Activated CD4-positive, alpha-beta T cell treated with anti-CD3 and anti-CD28 coated beads for 36 hours (primary cell): ENCODE measurements at regions of chr11 and their contacts with region 1.

Region 1: GRCh38 chr11:123478352-123478987 is 48.4 kb downstream of the GRAMD1B start:
- DNase-seq: peak; percentile 40
- ATAC-seq: peak; percentile 22
- H3K4me3 Mint-ChIP-seq: no peak overlapping the region
- H3K27ac Mint-ChIP-seq: peak overlapping the region; percentile 32
- H3K4me1 Mint-ChIP-seq: peaks cover 36% of the 10 kb centered on the region
- H3K27me3 Mint-ChIP-seq: no peaks in the 10 kb centered on the region

Region 2: GRCh38 chr11:121917482-121917881 is 1561.0 kb before region 1 on chr11:
- CTCF ChIA-PET with region 1: no interaction called
- POLR2A ChIA-PET with region 1: no interaction called
- intact Hi-C with region 1: no loop called
- DNase-seq: no peak
- ATAC-seq: no peak
- H3K4me3 Mint-ChIP-seq: no peak overlapping the region
- H3K27ac Mint-ChIP-seq: no peak overlapping the region
- H3K4me1 Mint-ChIP-seq: no peaks in the 10 kb centered on the region
- H3K27me3 Mint-ChIP-seq: no peaks in the 10 kb centered on the region

Region 3: DNA sequence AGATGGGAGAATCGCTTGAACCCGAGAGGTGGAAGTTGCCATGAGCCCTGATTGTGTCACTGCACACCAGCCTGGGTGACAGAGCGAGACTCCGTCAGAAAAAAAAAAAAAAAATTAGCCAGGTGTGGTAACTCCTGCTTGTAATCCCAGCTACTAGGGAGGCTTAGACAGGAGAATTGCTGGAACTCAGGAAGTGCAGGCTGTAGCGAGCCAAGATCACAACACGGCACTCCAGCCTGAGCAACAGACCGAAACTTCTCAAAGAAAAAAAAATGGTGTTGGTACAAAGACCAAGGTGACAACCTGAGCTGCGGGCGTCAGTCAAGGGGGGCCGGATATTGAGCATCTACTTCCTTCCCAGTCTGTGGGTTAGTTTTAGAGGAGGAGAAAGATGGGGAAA is 368.1 kb before region 1 on chr11:
- CTCF ChIA-PET with region 1: interaction called, 8 read pairs
- POLR2A ChIA-PET with region 1: no interaction called
- intact Hi-C with region 1: loop called (anchors 2 to 5 kb)
- DNase-seq: no peak
- ATAC-seq: no peak
- H3K4me3 Mint-ChIP-seq: no peak overlapping the region
- H3K27ac Mint-ChIP-seq: peak overlapping the region; percentile 5
- H3K4me1 Mint-ChIP-seq: no peaks in the 10 kb centered on the region
- H3K27me3 Mint-ChIP-seq: no peaks in the 10 kb centered on the region

Region 4: DNA sequence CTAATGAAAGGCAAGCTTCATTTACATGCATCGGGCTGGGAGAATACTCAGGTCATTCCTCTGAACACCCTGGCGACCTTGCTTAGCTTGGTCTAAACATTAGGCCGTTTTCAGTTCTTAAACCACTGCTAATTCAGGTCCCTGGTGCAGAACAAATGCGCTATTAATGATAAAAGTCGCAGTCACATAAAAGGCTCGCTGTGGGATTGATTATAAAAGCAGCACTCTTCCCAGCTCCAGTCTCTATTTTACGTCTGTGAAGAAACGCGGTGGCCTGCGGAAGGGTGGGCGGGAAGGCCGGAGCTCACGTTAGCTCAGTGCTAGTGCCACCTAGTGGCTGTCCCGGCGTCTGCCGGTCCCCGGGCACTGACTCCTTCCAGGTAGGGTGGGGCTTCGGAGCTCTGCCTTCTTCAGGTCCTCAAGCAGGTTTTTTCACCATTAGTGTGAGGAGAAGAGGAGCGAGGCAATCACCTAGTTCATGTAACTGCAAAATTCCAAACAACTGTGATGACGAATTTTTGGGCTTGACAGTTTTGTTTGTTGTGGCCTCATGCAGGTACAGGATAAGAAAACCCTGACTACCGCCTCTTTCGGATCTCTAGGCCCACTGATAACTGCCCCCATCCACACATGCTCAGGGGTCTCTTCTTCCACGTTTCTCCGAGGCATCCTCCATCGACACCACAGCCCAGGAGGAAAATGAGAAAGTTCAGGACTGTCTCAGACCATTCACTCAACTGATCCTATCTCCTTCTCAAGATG is 216.9 kb before region 1 on chr11:
- CTCF ChIA-PET with region 1: interaction called, 15 read pairs
- POLR2A ChIA-PET with region 1: no interaction called
- intact Hi-C with region 1: loop called in 1 of 2 experiments (anchors 1 kb)
- DNase-seq: peak; percentile 90
- ATAC-seq: peak; percentile 90
- H3K4me3 Mint-ChIP-seq: peak overlapping the region; percentile 22
- H3K27ac Mint-ChIP-seq: no peak overlapping the region
- H3K4me1 Mint-ChIP-seq: peaks cover 6% of the 10 kb centered on the region
- H3K27me3 Mint-ChIP-seq: peaks cover 12% of the 10 kb centered on the region

Region 5: DNA sequence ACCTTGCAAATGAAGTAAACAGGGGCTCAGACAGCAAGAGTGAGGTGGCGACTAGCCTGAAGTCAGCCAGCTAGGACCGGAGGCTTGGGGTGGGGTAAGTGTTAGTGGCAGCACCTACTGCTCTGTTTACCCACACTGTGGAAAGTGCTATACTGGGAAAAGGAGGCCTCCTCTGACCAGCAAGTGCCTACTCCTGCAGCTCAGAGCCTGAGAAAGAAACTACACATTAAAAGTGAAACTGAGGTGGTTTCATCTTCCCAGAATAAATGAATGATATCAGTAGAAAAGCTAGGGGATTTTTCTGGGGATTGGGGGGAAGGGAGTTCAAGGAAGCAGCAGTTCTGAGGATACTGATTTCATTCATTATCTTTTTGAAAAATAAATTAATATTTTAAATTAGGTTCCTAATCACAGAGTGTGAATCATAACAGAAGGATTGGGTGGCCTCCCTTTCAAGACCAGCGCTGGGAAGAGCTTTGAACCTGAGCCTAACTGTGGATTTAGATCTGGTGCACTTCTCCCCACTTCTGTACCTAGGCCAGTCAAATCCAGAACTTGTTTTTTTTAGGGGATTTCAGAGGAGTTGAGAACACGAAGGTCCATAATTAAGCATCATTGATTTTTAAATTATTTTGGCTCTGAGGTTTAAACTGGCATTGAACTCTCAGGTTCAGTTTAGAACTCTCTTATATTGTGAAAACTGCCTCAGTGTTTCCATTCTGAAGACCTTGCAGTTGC is 96.5 kb before region 1 on chr11:
- CTCF ChIA-PET with region 1: interaction called, 3 read pairs
- POLR2A ChIA-PET with region 1: no interaction called
- intact Hi-C with region 1: loop called in 1 of 2 experiments (anchors 1 kb)
- DNase-seq: peak; percentile 81
- ATAC-seq: peak; percentile 91
- H3K4me3 Mint-ChIP-seq: no peak overlapping the region
- H3K27ac Mint-ChIP-seq: peak overlapping the region; percentile 78
- H3K4me1 Mint-ChIP-seq: peaks cover 29% of the 10 kb centered on the region
- H3K27me3 Mint-ChIP-seq: peaks cover 4% of the 10 kb centered on the region

Region 6: DNA sequence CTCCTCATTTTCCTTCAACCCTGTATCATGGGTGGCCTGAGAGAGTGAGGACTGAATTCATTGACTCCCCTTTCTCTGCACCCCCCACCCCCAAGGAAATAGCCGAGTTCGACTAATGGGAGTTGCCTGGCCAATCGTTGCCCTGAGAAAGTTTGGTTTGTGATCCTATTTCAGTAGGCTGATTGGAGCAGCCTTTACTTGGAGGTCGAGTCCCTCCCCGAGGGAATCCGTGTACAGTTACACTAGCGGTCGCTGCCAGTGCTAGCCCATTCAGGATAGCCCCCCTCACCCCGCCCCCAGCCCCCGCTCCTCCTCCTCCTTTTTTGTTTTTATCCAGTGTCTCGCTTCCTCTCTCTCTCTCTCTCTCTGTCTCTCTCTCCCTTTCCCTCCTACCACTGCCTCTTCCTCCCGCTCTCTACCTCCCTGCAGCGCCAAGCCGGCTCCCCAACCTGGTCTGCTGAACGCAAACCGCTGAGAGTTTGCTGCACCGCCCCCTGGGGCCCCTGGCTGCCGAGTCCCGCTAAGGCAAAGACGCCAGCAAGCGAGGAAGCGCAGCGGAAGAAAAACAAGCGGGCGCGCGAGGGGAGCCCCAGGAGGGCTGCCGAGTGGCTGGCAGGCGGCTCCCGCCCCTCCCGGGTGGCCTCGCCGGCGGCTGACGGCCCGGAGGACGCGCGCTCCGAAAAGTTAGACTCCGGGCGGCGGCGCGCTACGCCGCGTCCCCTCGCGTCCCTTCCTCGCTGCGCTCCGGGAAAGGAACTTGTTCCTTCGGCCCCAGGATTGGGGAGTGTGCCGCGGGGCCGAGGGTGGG is 48.4 kb before region 1 on chr11 and contains the start of gene GRAMD1B:
- CTCF ChIA-PET with region 1: interaction called, 14 read pairs
- POLR2A ChIA-PET with region 1: interaction called, 4 read pairs
- intact Hi-C with region 1: loop called in 1 of 2 experiments (anchors 1 kb)
- DNase-seq: peak; percentile 90
- ATAC-seq: peak; percentile 68
- H3K4me3 Mint-ChIP-seq: peak within 1 kb of the TSS; percentile 76
- H3K27ac Mint-ChIP-seq: peak within 1 kb of the TSS; percentile 79
- H3K4me1 Mint-ChIP-seq: peaks cover 39% of the 10 kb centered on the region
- H3K27me3 Mint-ChIP-seq: no peaks in the 10 kb centered on the region
- total RNA-seq, gene GRAMD1B: 38.6 to 45.7 TPM

Region 7: DNA sequence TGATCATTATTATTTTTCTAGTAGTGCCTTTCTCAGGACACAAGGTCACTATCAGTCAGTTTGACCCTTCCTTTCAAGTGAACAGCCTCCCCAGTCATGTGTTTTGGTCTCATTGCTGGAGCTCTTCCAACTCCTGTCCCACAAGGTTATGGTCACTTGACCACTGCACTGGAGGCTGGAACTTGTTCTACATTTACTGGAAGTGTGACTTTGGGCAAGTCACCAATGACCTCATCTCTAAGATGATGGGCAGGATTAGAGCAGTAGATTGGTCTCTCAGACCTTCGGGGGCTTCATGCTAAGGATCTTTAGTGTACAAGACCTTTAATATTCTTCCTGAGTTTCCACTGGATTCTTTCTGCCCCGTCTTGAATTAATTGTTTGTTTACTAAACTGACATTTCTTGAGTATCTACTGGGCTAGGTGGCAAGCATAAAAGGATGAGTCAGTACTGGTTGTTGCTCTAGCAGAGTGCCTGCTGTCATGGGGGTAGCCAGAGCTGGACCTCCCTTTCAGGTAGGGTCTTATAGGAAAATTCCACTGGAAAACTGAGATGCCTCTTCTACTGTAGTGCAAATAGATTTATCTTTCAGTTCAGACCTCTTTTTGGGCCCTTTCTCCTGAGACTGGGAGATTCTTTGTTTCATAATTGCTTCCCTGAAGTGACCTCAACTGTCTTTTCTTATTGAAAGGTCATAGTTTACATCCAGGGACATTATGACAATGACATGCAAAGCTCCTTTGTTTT is 58.4 kb after region 1 on chr11:
- CTCF ChIA-PET with region 1: no interaction called
- POLR2A ChIA-PET with region 1: no interaction called
- intact Hi-C with region 1: no loop called
- DNase-seq: no peak
- ATAC-seq: no peak
- H3K4me3 Mint-ChIP-seq: no peak overlapping the region
- H3K27ac Mint-ChIP-seq: no peak overlapping the region
- H3K4me1 Mint-ChIP-seq: peaks cover 4% of the 10 kb centered on the region
- H3K27me3 Mint-ChIP-seq: no peaks in the 10 kb centered on the region

Region 8: GRCh38 chr11:123654566-123655081 is 176.2 kb after region 1 on chr11 and contains the start of gene SCN3B:
- CTCF ChIA-PET with region 1: no interaction called
- POLR2A ChIA-PET with region 1: no interaction called
- intact Hi-C with region 1: no loop called
- DNase-seq: peak; percentile 41
- ATAC-seq: peak; percentile 80
- H3K4me3 Mint-ChIP-seq: peak within 1 kb of the TSS; percentile 52
- H3K27ac Mint-ChIP-seq: no peak within 1 kb of the TSS
- H3K4me1 Mint-ChIP-seq: peaks cover 11% of the 10 kb centered on the region
- H3K27me3 Mint-ChIP-seq: peaks cover 42% of the 10 kb centered on the region
- total RNA-seq, gene SCN3B: not detected

Region 9: GRCh38 chr11:123945132-123945531 is 466.7 kb after region 1 on chr11:
- CTCF ChIA-PET with region 1: no interaction called
- POLR2A ChIA-PET with region 1: no interaction called
- intact Hi-C with region 1: no loop called
- DNase-seq: no peak
- ATAC-seq: no peak
- H3K4me3 Mint-ChIP-seq: no peak overlapping the region
- H3K27ac Mint-ChIP-seq: no peak overlapping the region
- H3K4me1 Mint-ChIP-seq: no peaks in the 10 kb centered on the region
- H3K27me3 Mint-ChIP-seq: peaks cover 4% of the 10 kb centered on the region